ENCODE measurements at regions of chr2 and their contacts with region 1.

Region 1: DNA sequence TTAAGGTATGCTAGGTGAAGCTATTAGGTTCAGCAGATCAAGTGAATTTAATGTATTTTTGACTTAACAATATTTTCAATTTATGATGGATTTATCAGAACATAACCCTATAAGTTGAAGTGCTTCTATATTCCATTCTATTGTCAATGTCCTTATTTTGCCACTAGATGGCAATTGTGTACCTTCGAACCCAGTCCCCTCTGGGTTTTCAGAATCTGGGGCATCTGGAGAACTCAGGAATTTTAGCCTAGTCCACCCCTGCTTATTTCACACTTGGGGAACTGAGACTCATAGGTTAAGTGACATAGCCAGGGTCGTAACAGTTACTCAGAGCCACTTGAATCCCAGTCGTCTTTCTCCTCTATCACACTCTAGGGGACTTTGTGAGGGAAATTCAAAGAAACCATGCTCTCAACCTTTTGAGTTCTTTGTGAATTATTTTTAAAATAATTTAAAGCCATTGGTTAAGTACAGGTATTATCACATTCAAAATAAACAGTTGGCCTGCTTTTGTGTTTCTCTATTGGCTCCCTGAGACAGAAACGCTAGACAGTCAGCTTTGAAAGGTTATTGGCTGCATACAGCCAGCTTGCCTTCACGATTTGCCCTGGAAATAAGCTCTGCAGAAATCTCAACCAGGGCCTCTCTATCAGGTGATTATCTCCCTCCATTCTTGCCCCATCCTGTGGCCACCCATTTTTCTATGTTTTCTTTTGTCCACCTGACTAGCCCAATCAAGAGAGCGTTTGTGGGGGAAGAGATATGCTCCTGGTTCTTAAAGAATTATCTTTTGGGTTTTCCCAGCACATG is 145.0 kb downstream of the TTC27 start:
- DNase-seq: no peak
- ATAC-seq: peak; percentile 74

Region 2: GRCh38 chr2:32874931-32875330 is 102.1 kb after region 1 on chr2:
- intact Hi-C with region 1: no loop called
- DNase-seq: no peak
- ATAC-seq: no peak

Region 3: GRCh38 chr2:32946314-32947075 is 173.7 kb after region 1 on chr2 and contains the start of gene LTBP1:
- intact Hi-C with region 1: loop called in 1 of 2 experiments (anchors 10 kb)
- DNase-seq: peak; percentile 82 to 84
- ATAC-seq: peak; percentile 84
- total RNA-seq, gene LTBP1: 21.2 to 24.8 TPM

Region 4: GRCh38 chr2:33583194-33583938 is 810.5 kb after region 1 on chr2:
- intact Hi-C with region 1: loop called in 1 of 2 experiments (anchors 10 kb)
- DNase-seq: peak in 1 of 2 donors; percentile 25
- ATAC-seq: peak; percentile 54